Activated CD4-positive, alpha-beta T cell treated with anti-CD3 and anti-CD28 coated beads for 36 hours (primary cell): ENCODE measurements at regions of chrX and their contacts with region 1.

Region 1: GRCh38 chrX:124346117-124346876 is at the start of gene SH2D1A:
- DNase-seq: peak; percentile 36
- ATAC-seq: peak; percentile 35
- H3K4me3 Mint-ChIP-seq: peak within 1 kb of the TSS; percentile 88
- H3K27ac Mint-ChIP-seq: peak within 1 kb of the TSS; percentile 95
- H3K4me1 Mint-ChIP-seq: peaks cover 46% of the 10 kb centered on the region
- H3K27me3 Mint-ChIP-seq: no peaks in the 10 kb centered on the region
- total RNA-seq, gene SH2D1A: 26.8 to 32.5 TPM

Region 2: GRCh38 chrX:124086411-124086810 is 259.9 kb before region 1 on chrX:
- CTCF ChIA-PET with region 1: no interaction called
- POLR2A ChIA-PET with region 1: no interaction called
- intact Hi-C with region 1: loop called (anchors 5 to 10 kb)
- DNase-seq: peak; percentile 58
- ATAC-seq: peak; percentile 96
- H3K4me3 Mint-ChIP-seq: peak overlapping the region; percentile 16
- H3K27ac Mint-ChIP-seq: peak overlapping the region; percentile 66
- H3K4me1 Mint-ChIP-seq: peaks cover 22% of the 10 kb centered on the region
- H3K27me3 Mint-ChIP-seq: no peaks in the 10 kb centered on the region

Region 3: DNA sequence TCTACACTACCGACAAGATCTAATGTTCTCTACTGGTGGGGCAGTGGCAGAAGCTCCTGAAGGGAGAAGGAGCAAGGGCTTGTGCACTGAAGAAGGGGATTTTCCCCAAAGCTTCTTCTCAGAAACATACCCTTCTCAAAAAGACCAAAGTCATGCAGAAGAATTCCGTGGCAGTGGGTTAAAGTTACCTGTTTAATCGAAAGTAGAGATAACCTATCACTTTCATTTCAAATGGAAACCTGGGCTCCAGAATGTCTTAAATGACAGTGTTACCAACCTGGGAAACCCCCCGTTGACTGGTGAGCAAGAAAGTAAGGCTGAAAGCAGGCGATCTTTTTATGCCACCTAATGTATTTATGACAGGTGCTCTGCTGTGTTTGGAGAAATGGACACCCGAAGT is 106.4 kb before region 1 on chrX:
- CTCF ChIA-PET with region 1: interaction called, 4 read pairs
- POLR2A ChIA-PET with region 1: interaction called, 9 read pairs
- intact Hi-C with region 1: loop called (anchors 1 to 2 kb)
- DNase-seq: peak; percentile 72
- ATAC-seq: peak; percentile 79
- H3K4me3 Mint-ChIP-seq: peak overlapping the region; percentile 31
- H3K27ac Mint-ChIP-seq: peak overlapping the region; percentile 75
- H3K4me1 Mint-ChIP-seq: peaks cover 45% of the 10 kb centered on the region
- H3K27me3 Mint-ChIP-seq: peaks cover 2% of the 10 kb centered on the region

Region 4: GRCh38 chrX:124280294-124280902 is 65.9 kb before region 1 on chrX:
- CTCF ChIA-PET with region 1: no interaction called
- POLR2A ChIA-PET with region 1: no interaction called
- intact Hi-C with region 1: loop called (anchors 5 kb)
- DNase-seq: no peak
- ATAC-seq: no peak
- H3K4me3 Mint-ChIP-seq: no peak overlapping the region
- H3K27ac Mint-ChIP-seq: peak overlapping the region; percentile 26
- H3K4me1 Mint-ChIP-seq: peaks cover 24% of the 10 kb centered on the region
- H3K27me3 Mint-ChIP-seq: no peaks in the 10 kb centered on the region

Region 5: DNA sequence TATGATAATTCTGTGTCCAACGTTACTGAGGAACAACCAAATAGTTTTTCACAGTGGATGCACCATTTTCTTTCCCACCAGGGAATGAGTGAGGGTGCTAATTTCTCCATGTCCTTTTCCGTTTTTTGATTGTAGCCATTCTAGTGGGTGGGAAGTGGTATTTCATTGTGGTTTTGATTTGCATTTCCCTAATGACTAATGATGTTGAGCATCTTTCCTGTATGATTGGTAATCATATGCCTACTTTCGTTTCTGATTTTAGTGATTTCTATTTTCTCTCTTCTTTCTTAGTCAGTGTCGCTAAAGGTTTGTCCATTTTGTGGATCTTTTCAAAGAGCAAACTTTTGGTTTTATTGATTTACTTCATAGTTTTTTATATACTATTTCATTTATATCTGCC is 45.9 kb before region 1 on chrX:
- CTCF ChIA-PET with region 1: no interaction called
- POLR2A ChIA-PET with region 1: interaction called, 7 read pairs
- intact Hi-C with region 1: loop called (anchors 2 kb)
- DNase-seq: no peak
- ATAC-seq: peak; percentile 70
- H3K4me3 Mint-ChIP-seq: peak overlapping the region; percentile 38
- H3K27ac Mint-ChIP-seq: peak overlapping the region; percentile 60
- H3K4me1 Mint-ChIP-seq: peaks cover 19% of the 10 kb centered on the region
- H3K27me3 Mint-ChIP-seq: no peaks in the 10 kb centered on the region

Region 6: DNA sequence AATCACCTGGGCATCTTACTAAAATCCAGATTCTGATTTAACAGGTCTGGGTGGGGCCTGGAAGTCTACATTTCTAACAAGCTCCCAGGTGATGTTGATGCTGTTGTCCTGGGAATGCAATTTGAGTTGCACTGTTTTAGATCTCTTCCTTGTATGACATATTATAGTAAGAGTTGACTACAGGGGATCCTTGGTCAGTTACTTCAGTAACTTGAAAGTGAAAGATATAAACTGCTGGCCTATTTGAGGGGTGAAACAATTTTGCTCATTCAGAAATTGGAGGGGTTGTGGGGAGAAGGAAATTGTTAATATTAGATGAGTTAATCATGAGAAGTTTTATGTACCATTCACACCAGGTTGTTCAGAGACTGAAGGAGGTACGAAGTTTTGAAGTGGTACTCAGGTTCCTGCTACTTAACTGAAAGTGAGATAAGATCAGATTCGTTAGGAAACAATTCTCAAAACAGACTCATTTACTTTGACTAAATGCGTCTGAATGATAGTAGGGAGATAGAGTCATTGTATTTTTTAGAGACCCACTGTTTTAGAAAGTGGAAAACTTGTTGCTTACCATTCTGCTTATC is 12.6 kb after region 1 on chrX:
- CTCF ChIA-PET with region 1: interaction called, 3 read pairs
- POLR2A ChIA-PET with region 1: interaction called, 3 read pairs
- intact Hi-C with region 1: loop called (anchors 1 kb)
- DNase-seq: no peak
- ATAC-seq: peak; percentile 69
- H3K4me3 Mint-ChIP-seq: peak overlapping the region; percentile 68
- H3K27ac Mint-ChIP-seq: peak overlapping the region; percentile 84
- H3K4me1 Mint-ChIP-seq: peaks cover 53% of the 10 kb centered on the region
- H3K27me3 Mint-ChIP-seq: no peaks in the 10 kb centered on the region

Region 7: GRCh38 chrX:125295337-125295736 is 949.0 kb after region 1 on chrX:
- CTCF ChIA-PET with region 1: no interaction called
- POLR2A ChIA-PET with region 1: no interaction called
- intact Hi-C with region 1: loop called in 1 of 2 experiments (anchors 10 kb)
- DNase-seq: no peak
- ATAC-seq: peak; percentile 74
- H3K4me3 Mint-ChIP-seq: peak overlapping the region; percentile 26
- H3K27ac Mint-ChIP-seq: peak overlapping the region; percentile 82
- H3K4me1 Mint-ChIP-seq: peaks cover 21% of the 10 kb centered on the region
- H3K27me3 Mint-ChIP-seq: no peaks in the 10 kb centered on the region